ENCODE measurements at regions of chr16 and their contacts with region 1.

Region 1: GRCh38 chr16:381789-382717 is at the start of gene PGAP6:
- DNase-seq: peak in 1 of 2 experiments; percentile 81
- H3K4me3 ChIP-seq: peak within 1 kb of the TSS; percentile 67
- H3K27ac ChIP-seq: no peak within 1 kb of the TSS
- H3K4me1 ChIP-seq: no peaks in the 10 kb centered on the region
- H3K27me3 ChIP-seq: no peaks in the 10 kb centered on the region
- CTCF ChIP-seq: no peak
- total RNA-seq, gene PGAP6: 41.4 and 45.6 TPM in 2 replicates

Region 2: DNA sequence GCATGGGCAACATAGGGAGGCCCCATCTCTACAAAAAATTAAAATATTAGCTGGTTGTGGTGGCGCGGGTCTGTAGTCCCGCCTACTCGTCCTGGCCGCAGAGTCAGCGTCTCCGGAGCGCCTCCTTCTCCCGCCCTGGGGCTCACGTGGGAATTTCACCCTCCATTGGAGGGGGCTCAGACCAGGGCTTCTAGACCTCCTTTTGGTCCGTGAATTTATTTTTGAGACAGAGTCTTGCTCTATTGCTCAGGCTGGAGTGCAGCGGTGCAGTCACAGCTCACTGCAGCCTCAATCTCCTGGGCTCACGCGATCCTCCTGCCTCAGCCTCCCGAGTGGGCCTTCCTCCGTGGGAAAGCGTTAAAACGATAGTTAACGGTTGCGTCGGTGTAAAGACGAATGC is 14.6 kb after region 1 on chr16:
- CTCF ChIA-PET with region 1: no interaction called
- POLR2A ChIA-PET with region 1: interaction called, 20 read pairs
- intact Hi-C with region 1: no loop called
- DNase-seq: peak in 1 of 2 experiments; percentile 41
- H3K4me3 ChIP-seq: peak overlapping the region; percentile 58
- H3K27ac ChIP-seq: no peak overlapping the region
- H3K4me1 ChIP-seq: peaks cover 16% of the 10 kb centered on the region
- H3K27me3 ChIP-seq: no peaks in the 10 kb centered on the region
- CTCF ChIP-seq: no peak

Region 3: GRCh38 chr16:440627-441026 is 58.6 kb after region 1 on chr16:
- CTCF ChIA-PET with region 1: no interaction called
- POLR2A ChIA-PET with region 1: no interaction called
- intact Hi-C with region 1: no loop called
- DNase-seq: no peak
- H3K4me3 ChIP-seq: no peak overlapping the region
- H3K27ac ChIP-seq: no peak overlapping the region
- H3K4me1 ChIP-seq: no peaks in the 10 kb centered on the region
- H3K27me3 ChIP-seq: no peaks in the 10 kb centered on the region
- CTCF ChIP-seq: no peak

Region 4: GRCh38 chr16:648781-649589 is 266.9 kb after region 1 on chr16 and contains the start of gene WDR90:
- CTCF ChIA-PET with region 1: interaction called, 7 read pairs
- POLR2A ChIA-PET with region 1: no interaction called
- intact Hi-C with region 1: loop called (anchors 10 kb)
- DNase-seq: peak; percentile 84 to 95
- H3K4me3 ChIP-seq: peak within 1 kb of the TSS; percentile 85
- H3K27ac ChIP-seq: peak within 1 kb of the TSS; percentile 82
- H3K4me1 ChIP-seq: peaks cover 54% of the 10 kb centered on the region
- H3K27me3 ChIP-seq: no peaks in the 10 kb centered on the region
- CTCF ChIP-seq: no peak
- total RNA-seq, gene WDR90: 118 and 126 TPM in 2 replicates

Measured in PC-9 (cell line).